ENCODE measurements at regions of chr3 and their contacts with region 1.

Region 1: DNA sequence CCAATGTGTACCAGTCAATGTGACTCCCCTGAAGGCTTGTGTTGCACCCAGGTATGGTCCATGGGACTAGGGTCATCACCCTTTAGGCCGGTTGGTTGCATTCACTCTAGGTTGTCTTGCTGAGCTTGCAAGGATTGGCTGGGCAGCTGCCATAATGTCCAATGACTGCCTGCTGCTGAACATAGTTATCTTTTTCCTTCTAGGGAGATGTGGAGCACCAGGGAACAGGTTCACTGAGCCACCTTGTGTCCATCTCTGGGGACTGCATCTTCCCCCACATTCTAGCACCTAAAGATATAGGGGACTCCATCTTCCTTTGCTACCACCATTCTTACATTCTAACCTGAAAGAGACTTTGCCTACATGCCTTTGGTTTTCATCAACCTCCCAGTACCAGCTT is 580.4 kb upstream of the TBL1XR1 start:
- DNase-seq: peak; percentile 56
- ATAC-seq: peak; percentile 43; the same call in 1 of the 2 replicates
- H3K4me3 ChIP-seq: no peak overlapping the region
- H3K27ac ChIP-seq: no peak overlapping the region
- H3K4me1 ChIP-seq: peaks cover 20% of the 10 kb centered on the region
- H3K27me3 ChIP-seq: no peaks in the 10 kb centered on the region
- CTCF ChIP-seq: peak; percentile 57
- POLR2A ChIP-seq: no peak
- RAD21 ChIP-seq: peak; percentile 75

Region 2: DNA sequence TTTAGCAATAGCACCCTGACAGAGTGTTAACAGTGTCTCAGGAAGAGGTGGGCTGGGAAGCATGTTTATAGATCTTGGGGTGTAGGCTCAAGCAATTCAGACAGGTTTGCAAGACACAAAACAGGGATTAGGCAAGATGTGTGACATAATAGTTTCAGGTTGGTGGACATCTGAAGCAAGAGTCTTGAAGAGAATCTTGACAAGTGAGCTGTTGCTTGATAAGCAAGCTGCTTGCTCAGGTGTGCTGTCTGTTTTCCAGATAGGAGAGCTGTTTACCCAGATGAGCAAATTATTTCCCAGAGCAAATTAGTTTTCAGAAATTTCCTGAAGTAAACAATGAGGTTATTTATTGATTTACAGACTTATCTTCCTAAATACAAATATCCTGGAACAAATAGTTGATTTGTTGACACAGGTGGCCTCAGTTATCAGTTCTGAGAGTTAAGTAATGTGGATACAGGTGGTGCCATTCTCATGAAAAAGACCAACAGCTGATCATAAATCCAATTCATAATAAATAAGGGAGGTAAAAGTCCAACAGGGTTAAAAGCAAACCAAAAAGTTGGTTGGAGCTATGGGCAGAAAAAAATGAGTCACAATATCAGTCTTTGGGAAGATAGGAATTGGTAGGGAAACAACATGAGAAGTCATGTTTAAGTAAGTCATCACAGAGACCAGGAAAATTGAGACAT is 1017.7 kb before region 1 on chr3:
- CTCF ChIA-PET with region 1: no interaction called
- POLR2A ChIA-PET with region 1: no interaction called
- dilution Hi-C with region 1: no loop called
- in situ Hi-C with region 1: no loop called
- intact Hi-C with region 1: loop called (anchors 5 kb)
- DNase-seq: no peak
- ATAC-seq: no peak
- H3K4me3 ChIP-seq: no peak overlapping the region
- H3K27ac ChIP-seq: no peak overlapping the region
- H3K4me1 ChIP-seq: no peaks in the 10 kb centered on the region
- H3K27me3 ChIP-seq: no peaks in the 10 kb centered on the region
- CTCF ChIP-seq: no peak
- POLR2A ChIP-seq: no peak
- RAD21 ChIP-seq: no peak

Measured in IMR-90 (cell line).